A673 (cell line): ENCODE measurements at regions of chr18 and their contacts with region 1.

Region 1: DNA sequence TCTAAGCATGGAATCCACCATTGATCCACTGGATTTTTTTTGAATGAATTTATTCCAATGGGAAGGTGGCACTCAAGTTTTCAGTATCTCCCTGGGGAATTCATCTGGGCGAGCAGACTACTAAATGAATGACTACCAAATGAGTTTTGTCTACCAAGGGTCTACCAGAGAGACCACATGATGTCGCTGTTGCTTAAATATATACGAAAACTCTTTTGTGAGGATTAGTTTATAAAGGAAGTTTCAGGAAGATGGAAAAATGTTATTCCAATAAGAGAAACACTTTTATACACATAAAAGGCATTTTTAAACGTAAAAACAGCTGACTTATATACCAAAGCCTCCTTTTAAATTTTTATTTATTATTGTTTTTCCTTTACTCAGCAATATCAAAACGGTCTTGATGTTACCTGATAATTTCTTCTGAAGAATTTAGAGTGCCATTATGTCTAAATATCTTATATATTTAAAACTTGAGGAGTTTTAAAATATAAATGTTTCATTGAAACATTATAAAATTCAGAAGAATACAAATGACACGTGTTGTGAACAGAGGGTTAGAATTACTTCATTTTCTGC is 139.7 kb downstream of the HRH4 start:
- DNase-seq: peak; percentile 81
- H3K4me3 ChIP-seq: no peak overlapping the region
- H3K27ac ChIP-seq: no peak overlapping the region
- H3K4me1 ChIP-seq: no peaks in the 10 kb centered on the region
- H3K27me3 ChIP-seq: peaks cover 39% of the 10 kb centered on the region
- CTCF ChIP-seq: peak; percentile 73

Region 2: DNA sequence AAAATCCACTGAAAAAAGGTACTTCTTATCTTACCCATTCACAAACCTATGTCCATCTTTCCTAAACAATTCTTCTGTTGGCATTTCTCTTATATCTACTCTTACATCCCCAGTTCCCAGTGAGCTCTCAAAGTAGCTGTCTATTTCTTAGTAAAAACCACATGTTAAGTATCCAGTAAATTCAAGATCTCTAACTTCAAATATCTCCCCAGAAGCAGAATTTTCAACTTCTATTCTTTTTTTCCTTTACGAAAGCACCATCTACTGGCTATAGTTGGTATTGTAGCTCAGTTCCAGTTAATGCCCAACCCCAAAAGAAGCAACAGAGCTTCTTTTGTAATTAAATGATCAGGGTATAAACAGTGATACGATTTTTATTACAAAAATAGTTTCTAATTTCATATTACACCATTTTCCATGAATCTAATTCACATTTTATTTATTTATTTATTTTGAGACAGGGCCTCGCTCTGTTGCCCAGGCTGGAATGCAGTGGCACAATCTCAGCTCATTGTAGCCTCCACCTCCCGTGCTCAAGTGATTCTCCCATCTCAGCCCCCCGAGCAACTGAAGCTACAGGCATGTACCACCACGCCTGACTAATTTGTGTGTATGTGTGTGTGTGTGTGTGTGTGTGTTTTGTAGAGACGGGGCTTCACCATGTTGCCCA is 111.2 kb before region 1 on chr18:
- CTCF ChIA-PET with region 1: interaction called, 8 read pairs
- POLR2A ChIA-PET with region 1: no interaction called
- intact Hi-C with region 1: loop called (anchors 5 kb)
- DNase-seq: peak; percentile 59
- H3K4me3 ChIP-seq: no peak overlapping the region
- H3K27ac ChIP-seq: no peak overlapping the region
- H3K4me1 ChIP-seq: no peaks in the 10 kb centered on the region
- H3K27me3 ChIP-seq: peaks cover 5% of the 10 kb centered on the region
- CTCF ChIP-seq: peak; percentile 73

Region 3: GRCh38 chr18:25392192-25392591 is 792.0 kb after region 1 on chr18:
- CTCF ChIA-PET with region 1: no interaction called
- POLR2A ChIA-PET with region 1: no interaction called
- intact Hi-C with region 1: no loop called
- DNase-seq: no peak
- H3K4me3 ChIP-seq: no peak overlapping the region
- H3K27ac ChIP-seq: no peak overlapping the region
- H3K4me1 ChIP-seq: no peaks in the 10 kb centered on the region
- H3K27me3 ChIP-seq: no peaks in the 10 kb centered on the region
- CTCF ChIP-seq: no peak

Region 4: GRCh38 chr18:25896178-25896780 is 1296.1 kb after region 1 on chr18:
- CTCF ChIA-PET with region 1: no interaction called
- POLR2A ChIA-PET with region 1: no interaction called
- intact Hi-C with region 1: loop called (anchors 5 kb)
- DNase-seq: peak; percentile 54
- H3K4me3 ChIP-seq: no peak overlapping the region
- H3K27ac ChIP-seq: no peak overlapping the region
- H3K4me1 ChIP-seq: no peaks in the 10 kb centered on the region
- H3K27me3 ChIP-seq: no peaks in the 10 kb centered on the region
- CTCF ChIP-seq: peak; percentile 77

Region 5: DNA sequence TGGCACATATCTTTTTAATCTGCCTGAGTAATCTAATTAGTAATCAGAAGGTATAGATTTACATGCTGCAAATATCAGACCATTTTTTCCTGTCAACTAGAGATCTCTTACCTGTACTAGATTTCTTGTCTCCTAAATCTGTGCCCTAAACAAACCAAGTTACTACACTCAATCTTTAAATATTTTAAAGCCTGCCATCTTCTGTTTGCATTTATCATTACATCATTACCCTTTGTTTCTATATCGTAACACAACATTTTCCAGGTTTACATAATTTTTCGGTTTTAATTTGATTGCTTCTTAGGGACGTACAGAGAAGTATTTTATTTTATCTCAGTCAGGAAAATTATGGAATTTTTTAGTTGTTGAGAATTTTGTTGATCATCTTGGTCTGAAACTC is 1559.2 kb after region 1 on chr18:
- CTCF ChIA-PET with region 1: no interaction called
- POLR2A ChIA-PET with region 1: no interaction called
- intact Hi-C with region 1: loop called (anchors 5 kb)
- DNase-seq: peak; percentile 6
- H3K4me3 ChIP-seq: no peak overlapping the region
- H3K27ac ChIP-seq: no peak overlapping the region
- H3K4me1 ChIP-seq: no peaks in the 10 kb centered on the region
- H3K27me3 ChIP-seq: no peaks in the 10 kb centered on the region
- CTCF ChIP-seq: peak; percentile 50; the same call in 1 of the 2 replicates